ENCODE measurements at regions of chr10 and their contacts with region 1.

Region 1: GRCh38 chr10:124388823-124389612 is 29.7 kb downstream of the OAT start:
- DNase-seq: peak; percentile 100
- H3K4me3 ChIP-seq: peak overlapping the region; percentile 54 to 65
- H3K27ac ChIP-seq: no peak overlapping the region
- H3K4me1 ChIP-seq: peaks cover 0 to 6% of the 10 kb centered on the region in 2 experiments; a peak in 1 of 4 replicates
- H3K27me3 ChIP-seq: no peaks in the 10 kb centered on the region
- CTCF ChIP-seq: peak; percentile 87
- EP300 ChIP-seq: no peak
- RAD21 ChIP-seq: peak; percentile 94

Region 2: DNA sequence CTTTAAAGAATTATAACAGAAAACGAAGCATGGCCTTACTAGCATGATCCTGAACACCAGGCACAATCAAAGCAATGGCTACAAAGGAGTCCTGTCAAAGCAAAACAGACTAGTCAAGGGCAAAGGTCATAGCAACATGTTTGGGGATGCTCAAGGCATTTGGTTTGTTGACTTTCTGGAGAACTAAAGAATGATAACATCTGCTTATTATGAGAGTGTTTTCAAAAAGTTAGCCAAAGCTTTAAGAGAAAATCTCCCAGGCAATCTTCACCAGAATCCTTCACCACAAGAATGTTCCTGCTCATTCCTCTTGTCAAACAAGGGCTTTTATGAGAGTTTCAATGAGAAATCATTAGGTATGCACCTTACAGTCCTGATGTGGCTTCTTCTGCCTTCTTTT is 402.3 kb before region 1 on chr10:
- CTCF ChIA-PET with region 1: interaction called, 520 read pairs
- POLR2A ChIA-PET with region 1: no interaction called
- DNase-seq: no peak
- H3K4me3 ChIP-seq: no peak overlapping the region
- H3K27ac ChIP-seq: no peak overlapping the region
- H3K4me1 ChIP-seq: no peaks in the 10 kb centered on the region
- H3K27me3 ChIP-seq: no peaks in the 10 kb centered on the region
- CTCF ChIP-seq: no peak
- EP300 ChIP-seq: no peak
- RAD21 ChIP-seq: no peak

Region 3: DNA sequence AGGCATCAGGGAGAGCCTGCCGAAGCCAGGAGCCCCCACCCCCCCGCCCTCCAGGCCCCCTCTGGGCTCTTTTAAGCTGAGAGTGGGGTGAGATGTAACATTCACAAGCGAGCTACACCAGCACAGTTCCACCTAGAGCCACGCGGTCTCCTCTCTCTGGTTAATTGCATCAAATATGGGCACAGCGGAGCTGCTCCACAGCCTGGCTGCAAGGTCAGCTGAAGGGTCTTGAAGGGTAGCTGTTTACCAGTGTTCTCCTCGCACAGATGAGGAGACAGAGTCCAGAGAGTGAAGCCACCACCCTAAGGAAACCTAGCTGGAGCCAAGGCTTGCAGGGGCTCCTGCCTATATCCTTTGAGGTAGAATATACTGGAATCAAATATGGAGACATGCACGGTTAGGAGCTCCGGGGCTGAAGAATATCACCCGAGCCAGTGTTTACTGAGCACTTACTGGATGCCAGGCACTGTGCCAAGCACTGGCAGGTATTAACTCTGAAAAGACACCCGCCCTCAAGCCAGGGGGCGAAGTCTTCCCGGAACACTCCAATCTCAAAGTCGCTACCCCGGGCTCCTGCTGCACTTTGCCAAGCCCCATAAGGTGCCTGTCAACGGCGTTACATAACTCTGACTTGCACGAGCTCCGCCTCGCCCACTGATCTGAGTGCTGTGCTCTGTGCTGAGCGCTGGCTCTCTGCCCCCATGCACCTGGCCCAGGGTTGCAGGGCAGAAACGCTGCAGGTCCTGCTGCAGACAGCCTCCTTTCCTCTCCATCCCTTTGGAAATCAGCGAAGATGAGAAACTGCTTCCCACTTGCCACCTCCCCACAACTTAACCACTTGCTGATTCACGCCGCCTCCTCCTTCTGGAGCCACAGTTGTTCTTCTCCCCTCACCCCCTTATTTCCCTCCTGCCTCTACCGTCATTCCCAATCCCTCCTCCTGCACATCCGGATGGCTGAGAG is 301.1 kb before region 1 on chr10:
- CTCF ChIA-PET with region 1: interaction called, 12 read pairs
- POLR2A ChIA-PET with region 1: no interaction called
- DNase-seq: peak; percentile 72
- H3K4me3 ChIP-seq: no peak overlapping the region
- H3K27ac ChIP-seq: no peak overlapping the region
- H3K4me1 ChIP-seq: peaks cover 0 to 16% of the 10 kb centered on the region in 2 experiments; a peak in 1 of 4 replicates
- H3K27me3 ChIP-seq: no peaks in the 10 kb centered on the region; the same call in 1 of the 2 replicates
- CTCF ChIP-seq: no peak
- EP300 ChIP-seq: no peak
- RAD21 ChIP-seq: no peak

Region 4: GRCh38 chr10:124236816-124237215 is 152.2 kb before region 1 on chr10:
- CTCF ChIA-PET with region 1: interaction called, 11 read pairs
- POLR2A ChIA-PET with region 1: no interaction called
- DNase-seq: no peak
- H3K4me3 ChIP-seq: no peak overlapping the region
- H3K27ac ChIP-seq: peak overlapping the region in 1 of 2 experiments; percentile 48; a peak in 2 of 4 replicates
- H3K4me1 ChIP-seq: peaks cover 0 to 28% of the 10 kb centered on the region in 2 experiments; a peak in 2 of 4 replicates
- H3K27me3 ChIP-seq: no peaks in the 10 kb centered on the region
- CTCF ChIP-seq: no peak
- EP300 ChIP-seq: no peak
- RAD21 ChIP-seq: no peak

Region 5: DNA sequence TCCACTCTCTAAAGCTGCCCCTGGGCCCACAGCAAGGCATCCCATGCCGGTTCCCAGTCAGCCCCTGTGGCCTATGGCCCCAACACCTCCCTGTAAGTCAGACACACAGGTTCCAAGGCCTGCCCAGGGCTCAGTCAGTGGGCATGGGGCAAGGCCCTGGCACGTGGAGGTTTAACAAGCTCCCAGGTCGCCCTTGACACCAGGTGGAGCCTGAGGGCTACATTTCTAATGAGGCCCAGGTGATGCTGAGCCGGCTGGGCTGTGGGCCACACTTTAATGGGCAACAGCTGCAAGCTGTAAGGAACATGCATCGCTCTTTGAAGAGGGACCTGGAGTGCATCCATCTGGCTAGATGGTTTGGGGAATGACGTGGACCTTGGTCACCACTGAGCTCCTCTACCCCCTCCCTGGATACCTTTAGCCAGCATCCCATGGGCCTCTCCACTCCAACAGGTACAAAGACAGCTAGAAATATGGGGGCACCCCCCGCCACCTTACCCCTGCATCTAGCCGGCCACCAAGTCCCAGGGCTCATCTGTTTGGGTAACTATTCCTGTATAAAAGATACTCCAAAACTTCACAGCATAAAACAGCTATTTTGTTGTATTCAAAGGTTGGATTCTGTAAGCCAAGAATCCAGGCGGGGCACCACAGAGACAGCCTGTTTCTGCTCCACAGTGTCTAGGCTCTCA is 92.8 kb before region 1 on chr10:
- CTCF ChIA-PET with region 1: interaction called, 21 read pairs
- POLR2A ChIA-PET with region 1: no interaction called
- DNase-seq: peak; percentile 53
- H3K4me3 ChIP-seq: no peak overlapping the region
- H3K27ac ChIP-seq: no peak overlapping the region
- H3K4me1 ChIP-seq: peaks cover 0 to 36% of the 10 kb centered on the region in 2 experiments; a peak in 1 of 4 replicates
- H3K27me3 ChIP-seq: no peaks in the 10 kb centered on the region
- CTCF ChIP-seq: no peak
- EP300 ChIP-seq: peak in 1 of 2 experiments; percentile 44; a peak in 1 of 4 replicates
- RAD21 ChIP-seq: peak; percentile 38

Region 6: GRCh38 chr10:124418726-124419501 is 29.9 kb after region 1 on chr10 and contains the start of gene OAT:
- CTCF ChIA-PET with region 1: interaction called, 11 read pairs
- POLR2A ChIA-PET with region 1: no interaction called
- DNase-seq: peak; percentile 99
- H3K4me3 ChIP-seq: peak within 1 kb of the TSS; percentile 76 to 87
- H3K27ac ChIP-seq: peak within 1 kb of the TSS; percentile 65 to 70
- H3K4me1 ChIP-seq: peaks cover 0 to 6% of the 10 kb centered on the region in 2 experiments; a peak in 1 of 4 replicates
- H3K27me3 ChIP-seq: peaks cover 14% of the 10 kb centered on the region; the same call in 1 of the 2 replicates
- CTCF ChIP-seq: peak; percentile 11
- EP300 ChIP-seq: no peak
- RAD21 ChIP-seq: 0 out of 2 replicates have a peak, but pooled peaks have one; percentile 1
- polyA plus RNA-seq, gene OAT: 65.7 and 97.6 TPM in 2 replicates

Measured in SK-N-SH (cell line).